PC-3 (cell line): ENCODE measurements at regions of chr22 and their contacts with region 1.

Region 1: GRCh38 chr22:39319270-39320022 is at the start of gene RPL3:
- DNase-seq: peak; percentile 94
- ATAC-seq: peak; percentile 67
- H3K4me3 ChIP-seq: peak within 1 kb of the TSS; percentile 97
- H3K27ac ChIP-seq: peak within 1 kb of the TSS; percentile 93
- H3K4me1 ChIP-seq: peaks cover 16% of the 10 kb centered on the region
- H3K27me3 ChIP-seq: no peaks in the 10 kb centered on the region
- CTCF ChIP-seq: no peak
- total RNA-seq, gene RPL3: 1,363 and 1,371 TPM in 2 replicates

Region 2: DNA sequence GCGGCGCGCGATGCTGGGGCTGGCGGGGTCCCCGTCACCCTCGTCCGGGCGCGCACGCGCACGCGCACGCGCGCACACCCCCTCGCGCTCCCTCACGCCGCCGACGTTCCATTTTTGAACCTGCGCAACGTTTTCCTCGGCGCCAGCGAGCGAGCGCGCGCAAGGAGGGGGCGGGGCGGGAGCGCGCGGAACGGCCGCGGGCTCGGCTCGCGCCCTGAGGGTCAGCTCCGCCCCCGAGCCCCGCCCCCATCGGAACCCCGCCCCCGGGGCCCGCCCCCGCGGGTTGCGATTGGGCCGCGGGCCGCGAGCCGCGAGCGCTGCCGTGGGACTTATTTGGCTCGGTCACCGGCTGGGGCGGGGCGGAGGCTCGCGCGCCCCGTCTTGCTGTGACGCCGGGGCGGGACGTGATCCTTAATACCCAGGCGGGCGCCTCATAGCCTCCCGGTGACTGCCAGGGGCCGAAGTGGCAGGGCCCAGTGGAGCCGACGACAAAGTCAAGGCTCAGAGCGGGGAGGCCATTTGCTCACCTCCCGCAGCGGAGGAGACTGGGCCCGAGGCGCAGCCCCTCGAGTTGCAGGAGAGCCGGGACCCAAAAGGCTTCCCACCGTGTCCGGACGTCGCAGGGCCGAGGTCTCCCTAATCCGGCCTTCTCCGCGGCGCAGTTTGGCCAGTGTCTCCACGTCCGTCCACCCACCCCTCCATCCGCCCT is 166.8 kb before region 1 on chr22 and contains the start of gene CBX7:
- CTCF ChIA-PET with region 1: no interaction called
- POLR2A ChIA-PET with region 1: no interaction called
- intact Hi-C with region 1: loop called (anchors 5 kb)
- DNase-seq: peak; percentile 84
- ATAC-seq: peak; percentile 91
- H3K4me3 ChIP-seq: peak within 1 kb of the TSS; percentile 71
- H3K27ac ChIP-seq: no peak within 1 kb of the TSS
- H3K4me1 ChIP-seq: peaks cover 5% of the 10 kb centered on the region; the same call in 1 of the 2 replicates
- H3K27me3 ChIP-seq: no peaks in the 10 kb centered on the region
- CTCF ChIP-seq: no peak
- total RNA-seq, gene CBX7: 8.0 and 8.6 TPM in 2 replicates

Region 3: GRCh38 chr22:39170825-39171622 is 148.4 kb before region 1 on chr22:
- CTCF ChIA-PET with region 1: interaction called, 6 read pairs
- POLR2A ChIA-PET with region 1: no interaction called
- intact Hi-C with region 1: loop called (anchors 2 kb)
- DNase-seq: peak; percentile 77
- ATAC-seq: peak; percentile 77
- H3K4me3 ChIP-seq: no peak overlapping the region
- H3K27ac ChIP-seq: no peak overlapping the region
- H3K4me1 ChIP-seq: peaks cover 32% of the 10 kb centered on the region
- H3K27me3 ChIP-seq: no peaks in the 10 kb centered on the region
- CTCF ChIP-seq: peak; percentile 81

Region 4: GRCh38 chr22:39240828-39241793 is 78.3 kb before region 1 on chr22:
- CTCF ChIA-PET with region 1: interaction called, 4 read pairs
- POLR2A ChIA-PET with region 1: no interaction called
- intact Hi-C with region 1: loop called (anchors 5 kb)
- DNase-seq: peak; percentile 49
- ATAC-seq: no peak
- H3K4me3 ChIP-seq: peak overlapping the region; percentile 95
- H3K27ac ChIP-seq: peak overlapping the region; percentile 43
- H3K4me1 ChIP-seq: peaks cover 33% of the 10 kb centered on the region
- H3K27me3 ChIP-seq: no peaks in the 10 kb centered on the region
- CTCF ChIP-seq: no peak

Region 5: DNA sequence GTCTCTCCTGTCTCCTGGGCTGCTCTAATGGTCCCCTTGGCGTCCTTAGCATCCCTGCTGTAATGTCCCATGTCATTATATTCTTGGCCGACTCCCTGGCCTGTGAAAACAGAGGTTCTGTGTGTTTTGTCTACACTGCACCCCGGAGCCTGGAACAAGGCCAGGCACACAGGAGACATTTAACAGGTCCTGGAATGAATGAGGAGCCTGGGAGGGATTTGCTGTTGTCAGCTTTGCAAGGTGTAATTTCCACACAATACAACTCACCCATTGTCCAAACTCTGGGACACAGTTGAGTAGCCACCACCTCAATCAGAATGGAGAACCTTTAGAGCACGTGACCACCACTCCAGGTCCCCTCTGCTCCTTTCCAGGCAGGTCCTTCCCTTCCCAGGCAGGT is 59.8 kb before region 1 on chr22:
- CTCF ChIA-PET with region 1: no interaction called
- POLR2A ChIA-PET with region 1: no interaction called
- intact Hi-C with region 1: no loop called
- DNase-seq: no peak
- ATAC-seq: no peak
- H3K4me3 ChIP-seq: no peak overlapping the region
- H3K27ac ChIP-seq: no peak overlapping the region
- H3K4me1 ChIP-seq: peaks cover 10% of the 10 kb centered on the region
- H3K27me3 ChIP-seq: no peaks in the 10 kb centered on the region
- CTCF ChIP-seq: no peak

Region 6: GRCh38 chr22:39308614-39309363 is 10.7 kb before region 1 on chr22:
- CTCF ChIA-PET with region 1: no interaction called
- POLR2A ChIA-PET with region 1: interaction called, 18 read pairs
- intact Hi-C with region 1: no loop called
- DNase-seq: peak; percentile 89
- ATAC-seq: peak; percentile 60
- H3K4me3 ChIP-seq: peak overlapping the region; percentile 46; the same call in 1 of the 2 replicates
- H3K27ac ChIP-seq: peak overlapping the region; percentile 68
- H3K4me1 ChIP-seq: peaks cover 18% of the 10 kb centered on the region
- H3K27me3 ChIP-seq: no peaks in the 10 kb centered on the region
- CTCF ChIP-seq: no peak